HEK293 (cell line): ENCODE measurements at regions of chr22 and their contacts with region 1.

Region 1: DNA sequence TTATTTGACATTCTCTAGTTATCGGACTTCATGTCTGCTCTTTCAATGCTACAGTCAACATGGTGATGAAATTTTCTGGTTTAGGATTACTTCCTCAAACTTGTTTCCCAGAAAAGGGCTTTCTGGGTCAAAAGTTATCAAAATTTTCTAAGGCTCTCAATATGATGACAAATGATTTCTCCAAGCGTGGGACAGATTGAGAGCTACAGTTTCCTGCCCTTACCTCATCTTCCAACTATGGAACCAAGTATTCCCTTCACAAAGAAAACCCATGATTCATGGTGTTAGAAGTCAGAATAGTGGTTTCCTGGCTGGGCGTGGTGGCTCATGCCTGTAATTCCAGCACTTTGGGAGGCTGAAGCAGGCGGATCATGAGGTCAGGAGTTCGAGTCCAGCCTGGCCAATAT is 17.8 kb downstream of the MYO18B start:
- H3K4me3 ChIP-seq: no peak overlapping the region
- H3K27ac ChIP-seq: no peak overlapping the region
- H3K4me1 ChIP-seq: no peaks in the 10 kb centered on the region
- CTCF ChIP-seq: no peak

Region 2: DNA sequence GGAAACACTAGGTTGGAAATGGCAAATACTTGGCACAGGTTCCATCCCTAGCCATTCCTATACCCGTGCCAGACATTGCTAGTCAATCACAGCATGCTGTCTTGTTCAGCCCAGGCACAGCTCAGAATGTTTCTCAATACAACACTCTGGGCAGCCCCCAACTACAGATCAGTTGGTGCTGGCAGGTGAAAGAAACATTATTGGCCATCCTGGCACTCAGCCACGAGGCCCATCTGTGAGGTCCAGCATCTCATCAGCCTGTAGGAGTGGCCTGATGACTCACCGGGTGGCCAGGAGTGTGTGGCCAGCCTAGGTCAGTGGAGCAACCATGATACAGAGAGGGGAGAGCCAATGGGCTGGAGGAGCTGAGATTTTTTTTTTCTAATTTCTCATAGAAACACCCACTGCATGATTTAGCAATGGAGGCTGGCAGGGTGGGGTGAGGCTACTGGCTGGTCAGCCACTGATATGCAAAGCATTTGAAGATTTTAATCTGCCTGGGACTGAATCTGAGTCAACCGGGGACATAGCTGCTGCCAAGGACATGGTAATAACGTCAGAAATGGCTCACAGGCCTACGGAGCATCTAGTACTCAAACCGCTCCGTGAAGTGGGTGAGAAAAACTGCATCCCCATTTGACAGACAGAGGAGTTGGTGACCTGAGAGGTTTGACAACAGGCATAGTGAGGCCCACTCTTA is 12.4 kb before region 1 on chr22:
- CTCF ChIA-PET with region 1: no interaction called
- POLR2A ChIA-PET with region 1: no interaction called
- H3K4me3 ChIP-seq: no peak overlapping the region
- H3K27ac ChIP-seq: no peak overlapping the region
- H3K4me1 ChIP-seq: no peaks in the 10 kb centered on the region
- CTCF ChIP-seq: no peak

Region 3: DNA sequence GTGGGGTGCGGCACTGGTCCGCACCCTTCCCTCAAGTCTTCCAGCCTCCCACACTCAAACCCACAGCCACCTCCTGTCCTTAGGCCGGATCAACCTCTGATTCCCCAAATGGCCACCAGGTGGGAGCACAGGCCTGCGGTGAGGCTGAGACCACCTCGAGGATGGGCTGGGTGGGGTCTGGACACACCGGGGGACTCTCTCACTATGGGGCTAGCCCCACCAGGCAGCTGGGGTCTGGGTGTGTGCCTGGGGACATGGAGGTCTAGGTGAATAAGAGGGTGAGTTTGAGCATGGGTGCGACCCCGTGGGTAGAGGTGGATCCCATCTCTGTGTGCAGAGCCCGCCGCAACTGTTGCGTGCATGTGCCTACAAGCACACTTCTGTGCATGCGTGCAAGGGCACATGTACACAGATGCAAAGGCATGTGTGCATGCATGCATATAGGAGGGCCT is 14.8 kb after region 1 on chr22:
- CTCF ChIA-PET with region 1: interaction called, 19 read pairs
- POLR2A ChIA-PET with region 1: no interaction called
- H3K4me3 ChIP-seq: no peak overlapping the region
- H3K27ac ChIP-seq: no peak overlapping the region
- H3K4me1 ChIP-seq: no peaks in the 10 kb centered on the region
- CTCF ChIP-seq: peak; percentile 57